Psoas muscle (tissue), 8 donors: ENCODE measurements at regions of chr10 and their contacts with region 1.

Region 1: DNA sequence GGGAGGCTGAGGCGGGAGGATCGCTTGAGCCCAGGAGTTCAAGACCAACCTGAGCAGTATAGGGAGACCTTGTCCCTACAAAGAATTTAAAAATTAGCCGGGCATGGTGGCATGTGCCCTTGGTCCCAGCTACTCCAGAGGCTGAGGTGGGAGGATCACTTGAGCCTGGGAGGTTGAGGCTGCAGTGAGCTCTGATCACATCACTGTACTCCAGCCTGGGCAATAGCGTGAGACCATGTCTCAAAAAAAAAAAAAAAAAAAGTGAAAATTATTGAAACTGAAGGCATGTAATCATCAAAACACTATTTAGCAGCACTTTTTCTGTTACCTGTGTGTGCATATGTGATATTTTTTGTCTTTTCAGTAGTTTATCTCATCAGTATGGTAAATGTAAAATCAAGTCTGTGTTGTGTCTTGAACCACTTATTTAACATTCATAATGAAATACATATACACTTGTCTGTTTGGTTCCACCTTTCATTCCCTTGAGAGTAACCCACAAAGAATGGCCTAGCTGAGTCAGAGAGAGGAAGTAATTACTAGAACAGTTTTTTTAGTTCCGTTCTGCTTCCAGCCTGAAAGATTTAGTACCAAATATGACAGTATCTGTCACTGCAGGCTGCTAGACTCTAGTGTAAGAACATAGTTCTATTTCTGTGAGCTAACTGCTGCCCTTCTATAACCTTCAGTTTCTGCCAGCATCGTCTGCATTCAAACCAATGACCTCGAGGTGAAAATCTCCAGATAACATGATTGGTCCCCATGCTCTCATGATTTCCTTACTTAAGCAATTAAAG is 68.6 kb downstream of the MMRN2 start:
- DNase-seq: no peak
- ATAC-seq: peak; percentile 74 to 89 (median 83)
- H3K4me3 ChIP-seq: no peak overlapping the region
- H3K27ac ChIP-seq: peak overlapping the region; percentile 69
- H3K4me1 ChIP-seq: peaks cover 22% of the 10 kb centered on the region
- H3K27me3 ChIP-seq: no peaks in the 10 kb centered on the region
- CTCF ChIP-seq: no peak

Region 2: DNA sequence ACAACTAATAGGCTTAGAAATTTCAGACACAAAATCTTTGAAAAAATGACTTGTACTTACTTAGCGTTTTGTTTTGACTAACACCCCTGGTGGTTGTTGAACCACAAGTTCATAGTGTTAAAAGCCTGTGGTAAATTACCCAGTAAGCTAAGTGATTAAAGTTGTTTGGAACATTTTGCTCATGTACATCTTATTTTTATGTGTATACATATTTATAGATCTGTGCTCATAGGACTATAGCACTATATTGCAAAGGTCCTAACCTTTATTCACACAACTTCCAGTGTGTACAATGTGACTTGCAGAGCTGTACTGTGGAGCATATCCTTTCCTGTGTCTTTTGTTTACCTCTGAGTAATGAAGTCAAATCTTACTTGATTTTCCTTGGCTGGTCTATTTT is 52.7 kb before region 1 on chr10:
- intact Hi-C with region 1: loop called in 1 of 2 experiments (anchors 10 kb)
- DNase-seq: no peak
- ATAC-seq: peak in 2 of 4 donors; percentile 40 to 44
- H3K4me3 ChIP-seq: no peak overlapping the region
- H3K27ac ChIP-seq: no peak overlapping the region
- H3K4me1 ChIP-seq: peaks cover 37% of the 10 kb centered on the region
- H3K27me3 ChIP-seq: no peaks in the 10 kb centered on the region
- CTCF ChIP-seq: no peak

Region 3: DNA sequence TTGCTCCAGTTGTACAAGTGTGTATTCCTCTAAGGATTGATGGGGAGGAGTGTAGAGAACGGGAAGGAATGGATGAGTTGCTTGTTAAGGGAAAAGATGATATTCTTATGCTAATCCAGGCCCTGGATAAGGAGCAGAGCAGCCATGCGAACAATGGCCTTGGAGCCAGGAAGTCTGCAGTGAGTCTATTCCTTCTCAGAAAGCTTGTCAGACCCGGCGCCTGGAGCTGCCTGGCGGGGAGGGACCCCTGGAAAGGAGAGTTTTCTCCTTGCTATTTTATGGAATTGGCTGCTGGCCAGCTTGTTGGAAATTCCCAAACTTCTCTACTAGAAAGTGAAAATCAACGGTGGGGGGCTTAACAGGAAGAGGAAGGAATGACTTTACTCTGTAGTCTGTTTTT is 20.4 kb before region 1 on chr10:
- intact Hi-C with region 1: loop called in 1 of 2 experiments (anchors 2 kb)
- DNase-seq: no peak
- ATAC-seq: no peak
- H3K4me3 ChIP-seq: no peak overlapping the region
- H3K27ac ChIP-seq: no peak overlapping the region
- H3K4me1 ChIP-seq: peaks cover 34% of the 10 kb centered on the region
- H3K27me3 ChIP-seq: no peaks in the 10 kb centered on the region
- CTCF ChIP-seq: no peak

Region 4: GRCh38 chr10:87000491-87000890 is 111.7 kb after region 1 on chr10:
- intact Hi-C with region 1: no loop called
- DNase-seq: no peak
- ATAC-seq: no peak
- H3K4me3 ChIP-seq: no peak overlapping the region
- H3K27ac ChIP-seq: no peak overlapping the region
- H3K4me1 ChIP-seq: no peaks in the 10 kb centered on the region
- H3K27me3 ChIP-seq: no peaks in the 10 kb centered on the region
- CTCF ChIP-seq: no peak